Activated CD8-positive, alpha-beta T cell treated with anti-CD3 and anti-CD28 coated beads for 36 hours (primary cell): ENCODE measurements at regions of chr1 and their contacts with region 1.

Region 1: GRCh38 chr1:231757101-231757404 is 130.5 kb downstream of the DISC1 start:
- DNase-seq: no peak
- ATAC-seq: peak; percentile 24
- H3K4me3 Mint-ChIP-seq: no peak overlapping the region
- H3K27ac Mint-ChIP-seq: no peak overlapping the region
- H3K4me1 Mint-ChIP-seq: no peaks in the 10 kb centered on the region
- H3K27me3 Mint-ChIP-seq: no peaks in the 10 kb centered on the region
- CTCF ChIP-seq: peak; percentile 66

Region 2: GRCh38 chr1:231724876-231725724 is 32.0 kb before region 1 on chr1:
- CTCF ChIA-PET with region 1: interaction called, 10 read pairs
- POLR2A ChIA-PET with region 1: no interaction called
- intact Hi-C with region 1: no loop called
- DNase-seq: peak; percentile 37
- ATAC-seq: no peak
- H3K4me3 Mint-ChIP-seq: no peak overlapping the region
- H3K27ac Mint-ChIP-seq: no peak overlapping the region
- H3K4me1 Mint-ChIP-seq: no peaks in the 10 kb centered on the region
- H3K27me3 Mint-ChIP-seq: no peaks in the 10 kb centered on the region
- CTCF ChIP-seq: peak; percentile 43

Region 3: GRCh38 chr1:231767471-231767870 is 10.4 kb after region 1 on chr1:
- CTCF ChIA-PET with region 1: interaction called, 38 read pairs
- POLR2A ChIA-PET with region 1: no interaction called
- intact Hi-C with region 1: no loop called
- DNase-seq: no peak
- ATAC-seq: no peak
- H3K4me3 Mint-ChIP-seq: no peak overlapping the region
- H3K27ac Mint-ChIP-seq: no peak overlapping the region
- H3K4me1 Mint-ChIP-seq: no peaks in the 10 kb centered on the region
- H3K27me3 Mint-ChIP-seq: no peaks in the 10 kb centered on the region
- CTCF ChIP-seq: no peak

Region 4: DNA sequence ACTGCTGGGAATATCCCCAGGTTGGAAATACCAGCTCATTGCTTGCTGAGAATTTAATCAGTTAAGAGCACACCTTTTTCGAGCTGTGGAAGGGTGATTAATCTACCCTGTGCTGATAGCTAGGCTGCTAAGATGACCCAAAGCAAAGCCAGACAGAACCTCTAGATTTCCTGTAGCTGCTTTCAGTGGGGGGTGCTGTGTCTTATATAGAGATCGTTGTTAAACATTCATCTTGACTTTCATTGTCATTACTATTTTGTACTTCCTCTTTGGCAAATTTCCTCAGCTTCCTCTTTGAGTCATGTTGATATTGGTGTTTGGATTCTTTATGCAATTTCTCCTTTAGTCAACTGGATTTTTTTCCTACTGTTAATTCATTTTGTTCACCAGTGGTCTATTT is 24.8 kb after region 1 on chr1:
- CTCF ChIA-PET with region 1: interaction called, 38 read pairs
- POLR2A ChIA-PET with region 1: no interaction called
- intact Hi-C with region 1: no loop called
- DNase-seq: no peak
- ATAC-seq: no peak
- H3K4me3 Mint-ChIP-seq: no peak overlapping the region
- H3K27ac Mint-ChIP-seq: no peak overlapping the region
- H3K4me1 Mint-ChIP-seq: no peaks in the 10 kb centered on the region
- H3K27me3 Mint-ChIP-seq: no peaks in the 10 kb centered on the region
- CTCF ChIP-seq: no peak

Region 5: GRCh38 chr1:231806623-231807495 is 49.8 kb after region 1 on chr1:
- CTCF ChIA-PET with region 1: interaction called, 35 read pairs
- POLR2A ChIA-PET with region 1: no interaction called
- intact Hi-C with region 1: loop called (anchors 5 kb)
- DNase-seq: peak; percentile 57
- ATAC-seq: peak; percentile 94
- H3K4me3 Mint-ChIP-seq: no peak overlapping the region
- H3K27ac Mint-ChIP-seq: no peak overlapping the region
- H3K4me1 Mint-ChIP-seq: no peaks in the 10 kb centered on the region
- H3K27me3 Mint-ChIP-seq: no peaks in the 10 kb centered on the region
- CTCF ChIP-seq: peak; percentile 59